ENCODE measurements at regions of chr21 and their contacts with region 1.

Region 1: DNA sequence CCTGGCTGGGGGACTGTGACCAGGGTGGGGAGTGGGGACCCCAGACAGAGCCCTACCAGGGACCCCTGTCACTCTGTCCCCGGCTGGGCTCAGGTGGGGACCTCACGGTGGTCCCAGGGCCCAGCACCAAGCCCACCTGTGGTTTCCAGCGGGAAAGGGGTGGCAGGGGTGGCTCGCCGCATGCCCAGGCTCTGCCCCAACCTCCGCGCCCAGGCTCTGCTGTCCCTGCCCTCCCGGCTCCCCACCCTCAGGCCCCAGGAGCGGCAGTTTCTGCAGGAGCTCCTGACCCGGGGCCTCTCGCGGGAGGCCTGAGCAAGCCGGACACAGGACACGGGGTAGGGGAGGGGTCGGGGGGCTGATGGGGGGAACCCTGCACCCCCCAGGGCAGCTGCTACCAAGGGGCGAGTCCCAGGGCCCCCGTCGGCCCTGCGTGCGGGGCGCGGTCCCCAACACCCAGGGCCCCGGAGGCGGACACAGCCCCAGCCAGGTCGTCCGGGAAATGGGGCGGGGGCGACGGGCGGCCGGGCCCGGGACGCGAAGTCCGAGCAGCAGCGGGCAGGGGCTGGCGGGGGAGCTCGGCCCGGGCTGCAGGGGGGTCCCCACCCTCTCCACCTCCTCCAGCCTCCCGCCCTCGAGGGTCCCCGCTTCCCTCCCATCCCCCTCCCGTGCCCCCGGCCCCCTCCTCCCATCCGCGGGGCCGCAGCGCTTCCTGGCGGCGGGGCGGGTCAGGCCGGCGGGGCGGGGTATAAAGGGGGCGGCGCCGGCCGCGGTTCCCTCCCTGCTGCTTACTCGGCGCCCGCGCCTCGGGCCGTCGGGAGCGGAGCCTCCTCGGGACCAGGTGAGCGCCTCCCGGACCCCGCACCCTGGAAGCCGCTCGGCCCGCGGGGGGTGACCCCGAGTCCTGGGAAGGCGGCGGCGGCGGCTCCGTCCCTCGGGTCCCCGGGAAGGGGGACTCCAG is at the start of gene COL6A2:
- DNase-seq: peak; percentile 84
- H3K4me3 Mint-ChIP-seq: peak within 1 kb of the TSS; percentile 57
- H3K27ac Mint-ChIP-seq: no peak within 1 kb of the TSS
- H3K4me1 Mint-ChIP-seq: no peaks in the 10 kb centered on the region
- H3K27me3 Mint-ChIP-seq: peaks cover 34% of the 10 kb centered on the region
- total RNA-seq, gene COL6A2: 2.0 and 2.3 TPM in 2 replicates

Region 2: DNA sequence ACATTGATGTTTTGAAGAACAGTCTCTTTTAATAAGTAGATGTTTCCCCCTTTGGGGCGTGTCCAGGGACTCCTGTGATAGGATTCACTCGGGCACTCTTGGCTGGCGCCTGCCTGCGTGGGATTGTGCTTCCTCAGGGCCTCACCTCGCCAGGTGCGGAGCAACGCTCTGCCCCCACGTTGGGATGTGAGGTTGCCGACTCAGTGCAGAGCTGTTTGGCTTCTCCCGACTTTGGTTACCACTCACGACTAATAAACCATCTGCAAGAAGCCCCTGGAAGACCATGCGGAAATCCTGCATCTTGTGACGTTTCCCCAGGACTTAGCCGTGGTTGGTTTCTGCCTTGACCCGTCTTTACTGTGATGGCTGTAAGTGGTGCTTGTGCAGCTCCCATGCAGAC is 347.6 kb before region 1 on chr21:
- intact Hi-C with region 1: no loop called
- DNase-seq: peak; percentile 53
- H3K4me3 Mint-ChIP-seq: no peak overlapping the region
- H3K27ac Mint-ChIP-seq: no peak overlapping the region
- H3K4me1 Mint-ChIP-seq: no peaks in the 10 kb centered on the region
- H3K27me3 Mint-ChIP-seq: no peaks in the 10 kb centered on the region

Region 3: GRCh38 chr21:45981151-45982089 is 116.2 kb before region 1 on chr21 and contains the start of gene COL6A1:
- intact Hi-C with region 1: loop called (anchors 5 kb)
- DNase-seq: peak; percentile 85
- H3K4me3 Mint-ChIP-seq: peak within 1 kb of the TSS; percentile 34
- H3K27ac Mint-ChIP-seq: no peak within 1 kb of the TSS
- H3K4me1 Mint-ChIP-seq: peaks cover 5% of the 10 kb centered on the region
- H3K27me3 Mint-ChIP-seq: peaks cover 21% of the 10 kb centered on the region
- total RNA-seq, gene COL6A1: 0.40 and 0.47 TPM in 2 replicates

Measured in activated CD4-positive, alpha-beta T cell treated with anti-CD3 and anti-CD28 coated beads, Interleukin-2, amount 10 ng/mL, durations not matched to agents 24 days and 14 days (primary cell).